Endothelial cell of umbilical vein (primary cell): ENCODE measurements at regions of chr12 and their contacts with region 1.

Region 1: GRCh38 chr12:102043928-102044327 is 17.9 kb downstream of the WASHC3 start:
- DNase-seq: no peak
- H3K4me3 ChIP-seq: no peak overlapping the region
- H3K27ac ChIP-seq: no peak overlapping the region
- H3K4me1 ChIP-seq: no peaks in the 10 kb centered on the region
- H3K27me3 ChIP-seq: no peaks in the 10 kb centered on the region
- CTCF ChIP-seq: no peak
- POLR2A ChIP-seq: no peak

Region 2: DNA sequence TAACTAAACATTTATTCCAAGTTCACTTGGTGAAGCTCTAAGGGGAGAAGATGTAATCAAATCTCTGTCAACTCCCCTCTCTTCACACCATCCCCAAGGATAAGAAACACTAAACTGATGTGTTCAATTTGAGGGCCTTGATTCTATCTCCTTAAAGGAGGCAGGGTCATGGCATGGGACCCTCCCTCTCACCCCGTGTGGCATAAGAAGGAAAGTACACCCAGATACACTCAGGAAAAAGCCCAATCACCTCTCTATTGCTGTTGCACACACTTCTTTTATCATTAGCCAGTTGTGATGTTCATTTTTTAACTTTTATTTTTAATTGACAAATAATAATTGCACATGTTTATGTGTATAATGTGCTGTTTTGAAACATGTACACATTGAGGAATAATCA is 17.2 kb before region 1 on chr12:
- CTCF ChIA-PET with region 1: interaction called, 4 read pairs
- POLR2A ChIA-PET with region 1: no interaction called
- dilution Hi-C with region 1: no loop called
- intact Hi-C with region 1: loop called (anchors 2 kb)
- DNase-seq: no peak
- H3K4me3 ChIP-seq: no peak overlapping the region
- H3K27ac ChIP-seq: no peak overlapping the region
- H3K4me1 ChIP-seq: no peaks in the 10 kb centered on the region
- H3K27me3 ChIP-seq: no peaks in the 10 kb centered on the region
- CTCF ChIP-seq: no peak
- POLR2A ChIP-seq: no peak